ENCODE measurements at regions of chr13 and their contacts with region 1.

Region 1: GRCh38 chr13:65638572-65639168 is 1591.5 kb downstream of the PCDH9 start:
- DNase-seq: peak; percentile 68
- H3K4me3 ChIP-seq: no peak overlapping the region
- H3K27ac ChIP-seq: no peak overlapping the region
- H3K4me1 ChIP-seq: no peaks in the 10 kb centered on the region
- H3K27me3 ChIP-seq: no peaks in the 10 kb centered on the region
- CTCF ChIP-seq: peak; percentile 78

Region 2: DNA sequence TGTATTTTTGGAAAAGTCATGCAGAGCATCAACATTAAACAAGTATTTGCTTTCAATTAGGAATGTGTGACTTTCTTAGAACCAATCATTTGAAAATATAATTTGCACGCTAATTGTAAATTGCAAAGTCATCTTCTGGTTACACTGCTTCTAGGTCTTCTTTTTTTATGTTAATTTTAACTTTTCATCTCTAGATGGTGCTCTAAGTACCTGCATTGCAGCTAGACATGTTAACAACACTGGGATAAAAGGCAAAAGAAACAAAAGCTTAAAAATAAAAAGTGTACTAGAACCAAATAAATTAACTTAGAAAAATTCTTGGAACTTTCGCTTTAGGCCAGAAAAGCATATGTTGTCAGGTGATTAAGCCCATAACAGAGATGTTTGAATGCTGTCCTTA is 1166.8 kb before region 1 on chr13:
- CTCF ChIA-PET with region 1: interaction called, 4 read pairs
- POLR2A ChIA-PET with region 1: no interaction called
- intact Hi-C with region 1: loop called (anchors 1 kb)
- DNase-seq: peak; percentile 75
- H3K4me3 ChIP-seq: no peak overlapping the region
- H3K27ac ChIP-seq: no peak overlapping the region
- H3K4me1 ChIP-seq: peaks cover 15% of the 10 kb centered on the region
- H3K27me3 ChIP-seq: no peaks in the 10 kb centered on the region
- CTCF ChIP-seq: peak; percentile 64

Region 3: DNA sequence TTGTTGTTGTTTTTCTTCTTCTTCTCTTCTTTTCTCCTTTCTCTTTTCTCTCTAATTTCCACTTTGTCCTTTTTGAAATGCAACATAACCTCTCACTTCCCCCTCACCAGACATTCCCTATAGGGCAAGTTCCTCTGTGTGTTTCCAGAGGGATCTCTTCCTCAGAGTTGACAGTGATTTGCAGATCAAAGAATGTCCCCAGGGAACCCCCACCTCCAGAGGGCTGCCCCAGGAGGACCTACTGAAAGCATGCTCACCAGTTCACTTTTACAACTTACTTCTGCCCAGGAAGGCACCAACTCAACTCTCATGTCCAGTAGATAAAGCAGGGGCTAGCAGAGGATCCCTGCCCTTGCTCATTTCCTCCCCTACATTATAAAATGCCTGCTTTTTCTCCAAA is 56.5 kb before region 1 on chr13:
- CTCF ChIA-PET with region 1: no interaction called
- POLR2A ChIA-PET with region 1: no interaction called
- intact Hi-C with region 1: no loop called
- DNase-seq: no peak
- H3K4me3 ChIP-seq: no peak overlapping the region
- H3K27ac ChIP-seq: no peak overlapping the region
- H3K4me1 ChIP-seq: no peaks in the 10 kb centered on the region
- H3K27me3 ChIP-seq: no peaks in the 10 kb centered on the region
- CTCF ChIP-seq: no peak